Activated T-helper 2 cell treated with anti-CD3 and anti-CD28 coated beads, Interferon-gamma antibody, Interleukin-2, Interleukin-4, amounts not matched to agents 10 μg/mL and 5 μg/mL and 100 μg/mL, durations not matched to agents 14 hours and 24 hours and 36 hours (primary cell): ENCODE measurements at regions of chr14 and their contacts with region 1.

Region 1: DNA sequence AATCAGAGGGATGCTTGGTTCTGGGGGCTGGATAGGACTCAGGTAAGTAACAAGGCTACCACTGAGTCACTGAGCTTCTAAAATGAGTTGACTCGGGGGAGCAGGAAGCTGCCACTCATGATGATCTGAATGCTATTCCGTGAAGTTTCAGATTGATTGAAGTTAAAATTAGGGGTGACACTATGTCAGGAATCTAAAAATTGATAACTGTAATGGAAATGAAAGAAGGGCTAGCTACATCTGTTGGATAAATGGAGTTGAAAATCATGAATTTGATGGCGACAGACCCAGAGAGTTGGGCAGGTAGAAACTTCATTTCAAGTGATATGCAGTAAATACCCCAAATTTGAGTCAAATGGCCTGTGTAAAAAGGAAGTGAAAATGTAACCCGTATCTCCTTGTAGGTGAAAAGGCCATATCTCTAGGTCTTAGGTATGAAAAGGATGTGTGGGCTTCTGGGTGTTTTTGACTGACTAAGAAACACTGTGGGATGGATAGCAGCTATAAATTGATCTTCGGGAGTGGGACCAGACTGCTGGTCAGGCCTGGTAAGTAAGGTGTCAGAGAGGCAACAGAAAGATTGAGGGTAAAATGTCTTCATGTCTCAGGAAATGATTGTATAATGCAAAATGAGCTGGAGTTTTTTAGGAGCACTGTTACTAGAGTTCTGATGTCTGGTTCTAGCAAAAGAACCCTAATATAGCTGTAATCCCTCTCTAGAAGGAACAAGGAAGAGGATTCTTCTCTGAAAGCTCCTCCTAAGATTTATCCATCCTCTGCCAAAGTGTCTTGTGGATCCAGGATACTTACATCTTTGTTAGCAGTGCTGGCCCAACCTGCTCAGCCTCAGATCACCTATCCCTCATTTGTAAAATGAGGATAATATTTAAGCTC is 57.3 kb downstream of the DAD1 start:
- DNase-seq: no peak
- H3K4me3 Mint-ChIP-seq: peak overlapping the region; percentile 76
- H3K27ac Mint-ChIP-seq: peak overlapping the region; percentile 88
- H3K4me1 Mint-ChIP-seq: peaks cover 87% of the 10 kb centered on the region
- H3K27me3 Mint-ChIP-seq: no peaks in the 10 kb centered on the region

Region 2: DNA sequence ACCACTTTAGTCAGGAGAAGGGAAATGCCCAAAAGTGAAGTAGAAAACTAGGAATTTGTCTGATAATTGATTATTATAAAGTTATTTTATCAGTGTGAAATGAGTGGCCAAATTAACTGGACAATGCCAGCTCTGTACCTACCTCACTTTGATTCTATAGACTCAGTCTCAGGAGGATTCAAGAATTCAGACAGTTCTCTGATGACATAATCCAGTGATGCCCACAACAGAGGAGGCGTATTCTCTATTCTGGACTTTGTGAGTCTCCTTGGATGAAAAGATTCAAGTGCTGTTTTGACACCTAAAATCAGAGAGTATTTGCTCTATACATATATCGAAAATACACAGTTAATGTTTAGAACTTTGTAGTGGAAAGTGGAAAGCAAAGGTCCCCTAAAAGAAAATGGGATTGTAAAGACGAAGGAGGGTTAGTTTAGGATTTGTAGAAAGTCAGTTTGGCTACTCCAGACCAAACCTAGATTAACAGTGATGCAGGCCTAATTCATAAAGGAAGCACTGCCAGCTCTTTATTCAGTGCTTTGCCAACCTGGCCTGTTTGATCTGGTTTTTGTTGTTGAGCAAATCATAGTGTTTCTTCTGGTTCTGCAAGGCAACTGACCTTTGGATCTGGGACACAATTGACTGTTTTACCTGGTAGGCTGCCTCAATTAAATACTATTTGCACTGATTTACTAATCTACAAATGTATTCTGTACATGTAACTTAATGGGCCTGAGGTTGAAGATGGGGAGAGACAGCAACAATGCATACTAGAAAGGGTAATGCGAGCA is 10.1 kb before region 1 on chr14:
- intact Hi-C with region 1: loop called (anchors 1 kb)
- DNase-seq: no peak
- H3K4me3 Mint-ChIP-seq: peak overlapping the region; percentile 78
- H3K27ac Mint-ChIP-seq: peak overlapping the region; percentile 87
- H3K4me1 Mint-ChIP-seq: peaks cover 93% of the 10 kb centered on the region
- H3K27me3 Mint-ChIP-seq: no peaks in the 10 kb centered on the region